Psoas muscle (tissue), 8 donors: ENCODE measurements at regions of chr22 and their contacts with region 1.

Region 1: DNA sequence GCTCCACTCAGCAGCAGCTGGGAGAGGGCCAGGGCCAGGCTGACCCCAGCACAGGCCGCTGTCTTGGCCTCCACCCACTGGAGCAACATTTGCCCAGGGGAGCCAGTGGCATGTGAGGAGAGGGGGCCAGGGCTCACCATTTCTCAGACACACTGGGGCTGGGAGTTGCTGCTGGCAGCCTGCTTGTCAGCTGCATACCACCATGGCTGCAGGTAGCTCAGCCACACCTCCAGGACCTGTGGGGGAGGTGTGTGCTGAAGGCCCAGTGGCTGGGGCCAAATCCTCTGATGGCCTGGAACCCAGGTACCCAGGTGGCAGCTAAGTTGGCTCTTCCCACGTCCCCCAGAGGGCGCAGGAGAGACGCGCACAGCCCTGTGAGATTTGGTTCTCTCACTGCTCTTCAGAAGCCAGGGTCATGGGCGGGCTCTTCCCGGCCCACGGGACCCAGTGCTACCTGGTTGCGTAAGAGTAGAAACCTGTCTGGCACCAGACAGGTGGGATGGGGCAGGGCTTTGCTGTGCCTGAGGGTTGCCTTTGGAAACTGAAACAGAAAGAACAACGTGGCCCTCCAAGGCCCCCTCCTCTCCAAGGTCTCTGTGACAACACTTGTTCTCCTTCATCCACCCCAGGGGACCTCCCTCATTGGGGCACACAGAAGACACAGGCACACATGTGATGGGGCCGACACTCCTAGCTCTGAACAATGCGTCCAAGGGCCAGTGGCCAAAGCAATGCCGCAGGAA is 98.8 kb downstream of the MED15 start:
- DNase-seq: no peak
- ATAC-seq: peak in 3 of 4 donors; percentile 33 to 71 (median 66)
- H3K4me3 ChIP-seq: no peak overlapping the region
- H3K27ac ChIP-seq: no peak overlapping the region
- H3K4me1 ChIP-seq: no peaks in the 10 kb centered on the region
- H3K27me3 ChIP-seq: no peaks in the 10 kb centered on the region
- CTCF ChIP-seq: peak; percentile 47

Region 2: GRCh38 chr22:20479612-20480196 is 126.5 kb before region 1 on chr22:
- intact Hi-C with region 1: loop called in 1 of 2 experiments (anchors 10 kb)
- DNase-seq: no peak
- ATAC-seq: no peak
- H3K4me3 ChIP-seq: no peak overlapping the region
- H3K27ac ChIP-seq: no peak overlapping the region
- H3K4me1 ChIP-seq: no peaks in the 10 kb centered on the region
- H3K27me3 ChIP-seq: no peaks in the 10 kb centered on the region
- CTCF ChIP-seq: no peak